Activated CD4-positive, alpha-beta T cell treated with anti-CD3 and anti-CD28 coated beads, Interleukin-2, amount 10 ng/mL, durations not matched to agents 24 days and 14 days (primary cell): ENCODE measurements at regions of chrX and their contacts with region 1.

Region 1: DNA sequence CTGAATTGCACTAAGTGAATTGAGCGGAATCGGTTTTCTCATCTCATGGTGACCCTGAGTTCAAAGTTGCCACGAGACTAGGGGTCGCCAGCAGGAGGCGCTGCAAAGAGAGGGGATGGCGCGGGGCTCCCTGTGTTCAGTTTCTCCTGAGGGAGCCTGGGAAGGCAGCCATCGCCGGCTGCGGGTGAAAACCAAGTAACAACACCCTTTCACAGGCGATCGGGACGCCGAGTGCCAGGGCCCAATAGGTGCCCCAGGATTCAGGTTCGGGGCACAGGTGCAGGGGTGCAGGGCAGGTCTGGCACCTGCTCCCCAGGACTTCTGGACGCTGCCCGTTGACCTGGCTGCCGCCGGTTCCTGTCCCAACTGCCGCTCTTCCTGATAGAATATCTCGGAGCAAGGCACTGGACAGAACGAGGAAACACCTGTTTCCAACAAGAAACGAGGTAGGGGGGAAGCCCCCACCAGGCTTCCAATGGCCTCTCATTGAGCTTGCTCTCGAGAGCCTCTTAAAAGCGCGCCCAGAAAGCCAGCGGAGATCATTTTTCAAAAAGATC is 1.1 kb upstream of the FGF16 start:
- DNase-seq: peak; percentile 59
- H3K4me3 Mint-ChIP-seq: peak overlapping the region; percentile 78
- H3K27ac Mint-ChIP-seq: no peak overlapping the region
- H3K4me1 Mint-ChIP-seq: peaks cover 11% of the 10 kb centered on the region
- H3K27me3 Mint-ChIP-seq: peaks cover 21% of the 10 kb centered on the region

Region 2: GRCh38 chrX:77009691-77010090 is 436.4 kb before region 1 on chrX:
- intact Hi-C with region 1: loop called (anchors 10 kb)
- DNase-seq: no peak
- H3K4me3 Mint-ChIP-seq: no peak overlapping the region
- H3K27ac Mint-ChIP-seq: no peak overlapping the region
- H3K4me1 Mint-ChIP-seq: peaks cover 5% of the 10 kb centered on the region
- H3K27me3 Mint-ChIP-seq: no peaks in the 10 kb centered on the region

Region 3: GRCh38 chrX:77426811-77427210 is 19.3 kb before region 1 on chrX:
- intact Hi-C with region 1: no loop called
- DNase-seq: no peak
- H3K4me3 Mint-ChIP-seq: no peak overlapping the region
- H3K27ac Mint-ChIP-seq: no peak overlapping the region
- H3K4me1 Mint-ChIP-seq: no peaks in the 10 kb centered on the region
- H3K27me3 Mint-ChIP-seq: no peaks in the 10 kb centered on the region

Region 4: GRCh38 chrX:77493677-77494553 is 47.8 kb after region 1 on chrX:
- intact Hi-C with region 1: no loop called
- DNase-seq: no peak
- H3K4me3 Mint-ChIP-seq: no peak overlapping the region
- H3K27ac Mint-ChIP-seq: no peak overlapping the region
- H3K4me1 Mint-ChIP-seq: no peaks in the 10 kb centered on the region
- H3K27me3 Mint-ChIP-seq: peaks cover 4% of the 10 kb centered on the region

Region 5: GRCh38 chrX:77527233-77528001 is 81.3 kb after region 1 on chrX:
- intact Hi-C with region 1: no loop called
- DNase-seq: no peak
- H3K4me3 Mint-ChIP-seq: no peak overlapping the region
- H3K27ac Mint-ChIP-seq: no peak overlapping the region
- H3K4me1 Mint-ChIP-seq: no peaks in the 10 kb centered on the region
- H3K27me3 Mint-ChIP-seq: no peaks in the 10 kb centered on the region